Activated B cell treated with CpG ODN at 0.5 μM for 24 hours (primary cell): ENCODE measurements at regions of chr3 and their contacts with region 1.

Region 1: DNA sequence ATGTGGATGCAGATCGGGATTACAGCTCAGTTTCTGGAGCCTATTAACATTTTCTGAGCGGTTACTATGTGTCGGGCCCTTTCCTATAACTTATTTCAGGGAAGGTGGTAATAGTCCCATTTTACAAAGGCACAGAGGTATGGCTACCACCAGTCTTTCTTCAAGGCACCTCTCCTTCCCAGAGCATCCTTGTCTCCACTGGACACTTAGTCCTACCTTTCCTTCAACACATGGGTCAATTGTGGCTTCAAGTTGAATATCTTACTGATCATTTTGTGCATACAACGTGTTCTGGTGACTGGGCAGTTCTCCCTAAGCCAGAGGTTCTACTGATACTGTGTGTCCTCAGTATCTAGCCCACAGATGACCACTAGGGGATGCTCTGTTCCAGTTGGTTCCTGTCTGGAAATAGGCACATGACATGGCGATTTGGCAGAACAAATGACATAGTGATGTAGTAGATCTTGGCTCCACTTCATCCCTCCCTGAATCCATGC is 60.7 kb upstream of the CMTM8 start:
- DNase-seq: no peak
- ATAC-seq: peak; percentile 69
- H3K4me3 Mint-ChIP-seq: no peak overlapping the region
- H3K27ac Mint-ChIP-seq: no peak overlapping the region
- H3K4me1 Mint-ChIP-seq: peaks cover 21% of the 10 kb centered on the region
- H3K27me3 Mint-ChIP-seq: peaks cover 1% of the 10 kb centered on the region
- CTCF ChIP-seq: no peak

Region 2: DNA sequence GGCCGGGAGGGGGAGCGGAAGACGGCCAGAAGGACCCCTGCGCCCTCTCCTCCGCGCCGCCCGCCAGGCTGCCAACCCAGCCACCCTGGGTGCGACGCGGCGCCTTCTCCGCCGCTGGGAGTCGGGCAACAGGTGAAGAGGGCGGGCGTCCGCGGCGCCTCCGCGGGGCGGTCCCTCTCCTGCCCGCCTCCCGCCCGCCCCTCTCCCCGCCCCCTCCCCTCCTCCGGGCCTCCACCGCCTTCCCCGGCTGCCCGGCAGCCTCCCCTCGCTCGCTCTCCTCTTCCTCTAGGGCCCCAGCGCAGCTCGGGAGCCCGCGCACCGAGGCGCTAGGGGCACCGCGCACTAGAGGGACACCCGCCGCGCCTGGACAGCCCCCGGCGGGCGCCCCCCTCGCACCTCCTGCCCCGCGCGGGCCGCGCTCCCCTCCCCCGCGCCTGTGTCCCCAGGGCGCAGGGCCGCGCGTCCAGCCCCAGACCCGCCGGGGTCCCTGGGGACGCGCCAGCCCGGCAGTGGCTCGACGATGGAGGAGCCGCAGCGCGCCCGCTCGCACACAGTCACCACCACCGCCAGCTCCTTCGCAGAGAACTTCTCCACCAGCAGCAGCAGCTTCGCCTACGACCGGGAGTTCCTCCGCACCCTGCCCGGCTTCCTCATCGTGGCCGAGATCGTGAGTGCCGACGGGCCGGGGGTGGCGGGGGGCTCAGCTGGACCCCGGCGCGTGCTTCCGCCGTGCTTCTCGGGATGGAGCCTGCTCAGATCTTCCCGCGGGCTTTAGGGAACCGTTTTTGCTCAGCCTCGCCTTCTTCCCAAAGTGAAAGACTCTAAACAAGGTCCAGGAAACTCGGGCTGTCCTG is 60.9 kb after region 1 on chr3 and contains the start of gene CMTM8:
- CTCF ChIA-PET with region 1: interaction called, 3 read pairs
- POLR2A ChIA-PET with region 1: no interaction called
- intact Hi-C with region 1: loop called (anchors 2 kb)
- DNase-seq: peak; percentile 45
- ATAC-seq: peak; percentile 83
- H3K4me3 Mint-ChIP-seq: peak within 1 kb of the TSS; percentile 81
- H3K27ac Mint-ChIP-seq: no peak within 1 kb of the TSS
- H3K4me1 Mint-ChIP-seq: peaks cover 21% of the 10 kb centered on the region
- H3K27me3 Mint-ChIP-seq: peaks cover 22% of the 10 kb centered on the region
- CTCF ChIP-seq: no peak
- total RNA-seq, gene CMTM8: 0.24 TPM in 1 of 2 replicates, not detected in the other

Region 3: DNA sequence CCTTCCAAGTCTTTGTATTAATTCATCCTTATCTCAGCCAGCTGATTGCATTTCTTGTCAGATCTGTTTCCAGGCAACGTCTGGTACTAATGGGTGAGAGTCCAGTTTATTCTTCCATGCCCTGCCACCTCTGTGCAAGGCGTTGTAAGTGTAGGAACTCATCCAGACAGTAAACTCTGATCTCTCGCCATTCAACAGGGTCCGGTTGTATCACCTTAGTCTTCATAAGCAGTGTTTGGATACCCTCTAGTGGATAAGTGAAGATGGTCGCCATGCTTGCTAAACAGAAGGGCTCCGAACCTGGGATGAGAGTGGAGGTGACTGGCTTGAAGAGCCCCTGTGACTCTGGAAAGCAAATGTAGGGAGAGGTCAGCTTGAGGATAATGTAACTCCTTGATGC is 162.3 kb after region 1 on chr3:
- CTCF ChIA-PET with region 1: no interaction called
- POLR2A ChIA-PET with region 1: no interaction called
- intact Hi-C with region 1: loop called (anchors 1 kb)
- DNase-seq: no peak
- ATAC-seq: no peak
- H3K4me3 Mint-ChIP-seq: no peak overlapping the region
- H3K27ac Mint-ChIP-seq: no peak overlapping the region
- H3K4me1 Mint-ChIP-seq: no peaks in the 10 kb centered on the region
- H3K27me3 Mint-ChIP-seq: no peaks in the 10 kb centered on the region
- CTCF ChIP-seq: no peak

Region 4: DNA sequence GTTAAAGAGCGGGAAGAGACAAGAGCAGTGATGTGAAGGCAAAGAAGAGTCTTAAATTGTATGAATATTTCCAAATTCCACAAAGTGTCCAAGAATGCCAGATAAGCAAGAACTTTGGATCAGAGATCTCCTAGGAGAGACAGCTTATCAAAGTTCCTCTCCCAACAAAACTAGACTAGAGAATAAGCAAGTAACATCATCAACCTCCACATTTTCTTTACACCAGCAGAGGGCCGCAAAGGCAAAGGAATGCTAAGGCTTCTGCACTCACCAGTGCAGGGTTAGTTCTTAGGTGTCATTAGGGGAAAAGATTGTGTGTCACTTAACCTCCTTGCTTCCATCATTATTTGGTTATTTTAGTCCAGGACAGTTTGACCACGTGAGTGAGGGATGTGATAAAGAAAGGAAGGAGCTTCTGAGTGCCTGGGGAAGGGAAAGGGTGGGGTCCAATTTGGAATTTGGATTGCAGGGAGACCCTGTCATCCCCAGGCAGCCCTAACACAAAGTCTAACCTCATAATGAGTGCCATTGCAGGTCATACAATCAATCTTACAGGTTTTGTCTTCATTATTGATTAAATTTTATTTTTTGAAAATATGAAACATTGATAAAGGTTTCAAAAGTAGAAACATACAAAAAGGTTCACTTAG is 332.4 kb after region 1 on chr3:
- CTCF ChIA-PET with region 1: no interaction called
- POLR2A ChIA-PET with region 1: no interaction called
- intact Hi-C with region 1: loop called (anchors 5 kb)
- DNase-seq: no peak
- ATAC-seq: peak; percentile 96
- H3K4me3 Mint-ChIP-seq: no peak overlapping the region
- H3K27ac Mint-ChIP-seq: peak overlapping the region; percentile 47
- H3K4me1 Mint-ChIP-seq: peaks cover 5% of the 10 kb centered on the region
- H3K27me3 Mint-ChIP-seq: no peaks in the 10 kb centered on the region
- CTCF ChIP-seq: peak; percentile 42

Region 5: DNA sequence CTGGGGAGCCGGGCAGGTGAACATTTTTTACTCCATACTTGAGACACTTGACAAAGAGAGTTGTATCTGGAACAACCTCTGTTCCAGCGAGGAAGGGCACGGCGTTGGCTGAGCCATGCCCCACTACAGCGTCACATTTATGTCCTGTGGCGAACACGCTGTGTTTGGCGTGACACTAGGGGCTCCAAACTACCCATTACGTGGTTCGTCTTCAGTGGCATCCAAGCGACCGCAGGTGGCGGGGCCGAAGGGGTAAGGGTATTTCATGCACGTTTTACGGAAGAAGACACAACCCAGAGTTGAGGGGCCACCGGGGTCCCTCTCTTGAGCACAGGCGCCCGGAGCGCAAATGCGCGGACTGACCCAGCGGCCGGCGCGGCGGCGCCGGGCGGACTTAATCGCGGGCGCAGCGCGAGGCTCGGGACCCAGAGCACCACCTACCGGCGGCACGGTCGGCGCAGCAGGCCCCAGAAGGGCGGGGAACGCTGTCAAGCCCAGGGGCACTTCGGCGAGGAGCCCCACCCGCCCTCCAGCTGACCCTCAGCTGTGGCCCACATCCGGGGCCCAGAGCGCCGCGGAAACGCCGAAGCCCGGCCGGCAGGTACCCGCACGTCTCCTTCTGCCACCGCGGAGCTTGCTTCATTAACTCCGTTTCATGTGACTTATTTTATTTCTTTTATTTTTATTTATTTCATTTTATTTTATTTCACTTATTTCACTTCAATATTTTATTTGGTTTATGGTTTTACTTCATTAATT is 603.6 kb after region 1 on chr3:
- CTCF ChIA-PET with region 1: no interaction called
- POLR2A ChIA-PET with region 1: no interaction called
- intact Hi-C with region 1: loop called (anchors 5 kb)
- DNase-seq: peak; percentile 71
- ATAC-seq: peak; percentile 91
- H3K4me3 Mint-ChIP-seq: peak overlapping the region; percentile 90
- H3K27ac Mint-ChIP-seq: no peak overlapping the region
- H3K4me1 Mint-ChIP-seq: peaks cover 5% of the 10 kb centered on the region
- H3K27me3 Mint-ChIP-seq: no peaks in the 10 kb centered on the region
- CTCF ChIP-seq: peak; percentile 80